T-cell (primary cell): ENCODE measurements at regions of chr15 and their contacts with region 1.

Region 1: GRCh38 chr15:60555291-60555690 is 76.3 kb upstream of the ICE2 start:
- DNase-seq: no peak
- ATAC-seq: no peak
- H3K4me3 ChIP-seq: no peak overlapping the region
- H3K4me3 Mint-ChIP-seq: no peak overlapping the region
- H3K27ac ChIP-seq: peak overlapping the region; percentile 73
- H3K27ac Mint-ChIP-seq: peak overlapping the region; percentile 66 to 92
- H3K4me1 ChIP-seq: peaks cover 45 to 51% of the 10 kb centered on the region in 2 experiments
- H3K4me1 Mint-ChIP-seq: peaks cover 89 to 95% (median 95%) of the 10 kb centered on the region in 3 donors
- H3K27me3 ChIP-seq: no peaks in the 10 kb centered on the region
- H3K27me3 Mint-ChIP-seq: no peaks in the 10 kb centered on the region

Region 2: DNA sequence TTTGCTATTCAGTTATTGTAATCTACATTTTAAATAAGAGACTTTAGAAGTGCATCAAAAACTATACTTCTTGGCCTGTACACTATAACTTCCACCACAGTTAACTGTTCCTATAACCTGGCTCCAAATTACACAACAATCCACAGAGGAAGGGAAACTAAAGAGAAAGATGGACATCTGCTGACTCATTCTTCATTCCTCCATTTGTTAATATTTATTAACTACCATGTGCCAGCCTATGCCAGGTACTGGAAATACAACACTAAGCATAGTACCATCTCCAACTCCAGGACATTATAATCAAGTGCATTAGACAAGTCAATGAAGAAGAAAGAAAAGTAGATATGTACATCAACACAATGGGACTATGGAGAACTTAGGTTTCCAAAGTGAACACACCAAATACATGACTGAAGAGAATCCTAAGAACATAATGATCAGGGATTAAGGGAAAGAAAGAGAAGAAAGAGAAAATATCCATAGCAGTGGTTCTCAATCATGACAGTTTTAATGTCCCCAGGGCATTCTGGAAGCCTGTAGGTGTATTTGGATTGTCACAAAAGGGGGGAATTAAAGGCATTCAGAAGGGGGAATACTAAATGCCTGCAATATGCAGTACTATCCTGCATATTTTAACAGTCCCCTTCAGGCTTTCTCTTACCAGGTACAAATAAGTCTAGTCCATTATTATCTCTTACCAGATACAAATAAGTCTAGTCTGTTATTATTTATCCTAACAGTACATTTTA is 85.2 kb before region 1 on chr15:
- CTCF ChIA-PET with region 1: interaction called in 1 of 2 experiments, 10 read pairs
- POLR2A ChIA-PET with region 1: no interaction called
- DNase-seq: no peak
- ATAC-seq: no peak
- H3K4me3 ChIP-seq: no peak overlapping the region
- H3K4me3 Mint-ChIP-seq: no peak overlapping the region
- H3K27ac ChIP-seq: no peak overlapping the region
- H3K27ac Mint-ChIP-seq: no peak overlapping the region
- H3K4me1 ChIP-seq: no peaks in the 10 kb centered on the region
- H3K4me1 Mint-ChIP-seq: peaks cover 20 to 30% (median 25%) of the 10 kb centered on the region in 3 donors
- H3K27me3 ChIP-seq: no peaks in the 10 kb centered on the region
- H3K27me3 Mint-ChIP-seq: no peaks in the 10 kb centered on the region

Region 3: DNA sequence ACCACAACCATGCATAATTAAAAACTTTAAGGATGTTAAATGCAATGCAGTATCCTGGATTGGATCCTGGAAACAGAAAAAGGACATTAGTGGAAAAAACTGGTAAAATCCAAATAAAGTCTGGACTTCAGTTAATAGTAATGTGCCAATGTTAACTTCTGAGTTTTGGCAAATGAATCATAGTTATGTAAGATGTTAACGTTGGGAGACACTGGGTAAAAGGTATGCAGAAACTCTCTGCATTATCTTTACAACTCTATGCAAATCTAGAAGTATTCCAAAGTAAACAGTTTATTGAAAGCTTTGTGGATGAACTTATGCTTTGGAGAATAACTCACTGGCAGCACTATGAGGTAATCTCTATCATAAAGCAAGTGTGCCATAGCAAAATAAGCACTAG is 316.4 kb after region 1 on chr15:
- CTCF ChIA-PET with region 1: no interaction called
- POLR2A ChIA-PET with region 1: no interaction called
- DNase-seq: no peak
- ATAC-seq: no peak
- H3K4me3 ChIP-seq: no peak overlapping the region
- H3K4me3 Mint-ChIP-seq: no peak overlapping the region
- H3K27ac ChIP-seq: no peak overlapping the region
- H3K27ac Mint-ChIP-seq: no peak overlapping the region
- H3K4me1 ChIP-seq: no peaks in the 10 kb centered on the region
- H3K4me1 Mint-ChIP-seq: no peaks in the 10 kb centered on the region
- H3K27me3 ChIP-seq: no peaks in the 10 kb centered on the region
- H3K27me3 Mint-ChIP-seq: no peaks in the 10 kb centered on the region